ENCODE measurements at regions of chr3 and their contacts with region 1.

Region 1: GRCh38 chr3:64484289-64484992 is 203.4 kb downstream of the ADAMTS9 start:
- DNase-seq: peak; percentile 54
- H3K4me3 Mint-ChIP-seq: no peak overlapping the region
- H3K27ac Mint-ChIP-seq: no peak overlapping the region
- H3K4me1 Mint-ChIP-seq: peaks cover 6% of the 10 kb centered on the region
- H3K27me3 Mint-ChIP-seq: peaks cover 18% of the 10 kb centered on the region

Region 2: DNA sequence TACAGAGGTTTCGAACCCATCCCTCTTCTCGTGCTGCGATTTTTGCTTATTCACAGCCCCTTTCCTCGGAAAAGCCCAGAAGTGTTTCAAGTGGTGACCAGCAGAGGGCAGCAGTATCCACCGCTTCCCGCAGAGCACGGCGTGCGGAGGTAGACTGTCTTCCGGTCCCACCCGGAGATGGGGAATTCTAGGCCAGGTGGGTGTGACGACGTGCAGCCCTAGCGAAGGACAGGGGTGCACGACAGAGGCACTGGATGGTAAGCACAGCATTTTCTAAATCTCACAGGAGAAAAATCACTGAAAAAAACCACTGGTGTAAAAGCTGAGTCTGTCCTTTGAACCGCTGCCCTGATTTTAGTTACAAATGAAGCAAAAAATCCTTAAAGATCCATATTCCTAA is 453.7 kb before region 1 on chr3:
- intact Hi-C with region 1: loop called (anchors 1 kb)
- DNase-seq: peak; percentile 61
- H3K4me3 Mint-ChIP-seq: peak overlapping the region; percentile 64
- H3K27ac Mint-ChIP-seq: peak overlapping the region; percentile 64
- H3K4me1 Mint-ChIP-seq: peaks cover 16% of the 10 kb centered on the region
- H3K27me3 Mint-ChIP-seq: peaks cover 27% of the 10 kb centered on the region

Region 3: GRCh38 chr3:64291345-64291744 is 193.1 kb before region 1 on chr3:
- intact Hi-C with region 1: no loop called
- DNase-seq: no peak
- H3K4me3 Mint-ChIP-seq: no peak overlapping the region
- H3K27ac Mint-ChIP-seq: no peak overlapping the region
- H3K4me1 Mint-ChIP-seq: no peaks in the 10 kb centered on the region
- H3K27me3 Mint-ChIP-seq: no peaks in the 10 kb centered on the region